ENCODE measurements at regions of chr3 and their contacts with region 1.

Region 1: DNA sequence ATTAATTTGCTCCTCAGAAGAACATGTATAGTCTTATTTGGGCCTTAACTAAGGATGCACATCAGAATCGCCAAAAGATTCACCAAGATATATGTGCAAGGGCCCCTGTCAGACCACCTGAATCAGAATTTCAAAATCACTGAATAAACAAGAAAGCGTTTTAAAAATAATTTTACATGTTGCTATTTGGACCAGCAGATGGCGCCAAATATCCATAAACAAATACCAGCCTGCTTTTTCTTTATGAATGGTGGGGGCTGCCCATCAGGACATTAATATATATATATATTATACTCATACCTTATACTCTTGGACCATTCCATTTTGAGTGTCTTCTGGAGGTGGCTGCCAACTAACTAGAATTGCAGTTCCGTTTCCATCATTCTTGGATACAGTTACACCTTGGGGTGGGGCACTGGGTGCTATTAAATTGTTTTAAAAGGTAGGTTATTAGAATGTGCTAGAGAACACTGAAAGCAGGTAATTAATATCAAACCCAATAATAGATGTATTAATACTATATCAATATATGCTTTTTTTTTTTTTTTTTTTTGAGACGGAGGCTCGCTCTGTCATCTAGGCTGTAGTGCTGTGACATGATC is 1108.3 kb downstream of the ROBO1 start:
- DNase-seq: peak; percentile 17
- H3K4me3 ChIP-seq: no peak overlapping the region
- H3K27ac ChIP-seq: no peak overlapping the region
- H3K4me1 ChIP-seq: no peaks in the 10 kb centered on the region
- H3K27me3 ChIP-seq: no peaks in the 10 kb centered on the region
- CTCF ChIP-seq: peak; percentile 59 to 69 (median 68)
- EP300 ChIP-seq: no peak
- POLR2A ChIP-seq: no peak

Region 2: DNA sequence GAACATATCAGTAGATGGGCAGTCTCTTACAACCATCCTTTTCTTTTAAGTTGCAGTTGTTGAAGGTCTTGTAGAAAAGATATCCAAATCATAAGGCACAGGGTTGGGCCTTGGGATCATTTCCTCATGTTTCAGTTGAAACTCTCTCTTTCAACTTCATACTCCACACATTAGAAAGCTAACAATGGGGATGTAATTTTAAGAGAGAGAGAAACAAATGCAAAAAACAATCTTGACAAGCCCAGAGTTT is 360.4 kb after region 1 on chr3:
- in situ Hi-C with region 1: loop called (anchors 5 to 25 kb)
- intact Hi-C with region 1: no loop called
- DNase-seq: no peak
- H3K4me3 ChIP-seq: no peak overlapping the region
- H3K27ac ChIP-seq: peak overlapping the region in 3 of 4 donors; percentile 81 to 89 (median 87)
- H3K4me1 ChIP-seq: peaks cover 0 to 23% (median 4%) of the 10 kb centered on the region in 4 donors
- H3K27me3 ChIP-seq: peaks cover 12% of the 10 kb centered on the region
- CTCF ChIP-seq: no peak
- EP300 ChIP-seq: no peak
- POLR2A ChIP-seq: no peak

Region 3: DNA sequence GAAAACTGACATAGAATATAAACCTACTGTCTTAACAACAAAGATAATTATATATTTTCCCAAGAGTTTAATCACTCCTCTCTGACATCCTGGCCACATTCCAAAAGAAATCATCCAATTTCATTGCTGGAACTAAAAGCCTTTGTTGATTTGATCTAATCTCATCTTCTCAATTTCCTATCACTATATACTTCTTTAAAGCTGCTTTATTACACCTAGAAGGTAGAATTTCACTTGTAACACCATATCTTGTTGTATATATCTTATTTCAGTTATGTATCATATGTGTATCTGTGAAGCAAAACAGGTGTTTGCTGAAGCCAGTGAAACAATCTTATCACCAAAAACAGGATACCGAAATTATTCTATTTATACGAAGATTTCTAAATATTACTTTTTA is 368.1 kb after region 1 on chr3:
- in situ Hi-C with region 1: loop called (anchors 5 to 25 kb)
- intact Hi-C with region 1: loop called (anchors 1 kb)
- DNase-seq: no peak
- H3K4me3 ChIP-seq: no peak overlapping the region
- H3K27ac ChIP-seq: no peak overlapping the region
- H3K4me1 ChIP-seq: no peaks in the 10 kb centered on the region
- H3K27me3 ChIP-seq: no peaks in the 10 kb centered on the region
- CTCF ChIP-seq: no peak
- EP300 ChIP-seq: no peak
- POLR2A ChIP-seq: no peak

Region 4: DNA sequence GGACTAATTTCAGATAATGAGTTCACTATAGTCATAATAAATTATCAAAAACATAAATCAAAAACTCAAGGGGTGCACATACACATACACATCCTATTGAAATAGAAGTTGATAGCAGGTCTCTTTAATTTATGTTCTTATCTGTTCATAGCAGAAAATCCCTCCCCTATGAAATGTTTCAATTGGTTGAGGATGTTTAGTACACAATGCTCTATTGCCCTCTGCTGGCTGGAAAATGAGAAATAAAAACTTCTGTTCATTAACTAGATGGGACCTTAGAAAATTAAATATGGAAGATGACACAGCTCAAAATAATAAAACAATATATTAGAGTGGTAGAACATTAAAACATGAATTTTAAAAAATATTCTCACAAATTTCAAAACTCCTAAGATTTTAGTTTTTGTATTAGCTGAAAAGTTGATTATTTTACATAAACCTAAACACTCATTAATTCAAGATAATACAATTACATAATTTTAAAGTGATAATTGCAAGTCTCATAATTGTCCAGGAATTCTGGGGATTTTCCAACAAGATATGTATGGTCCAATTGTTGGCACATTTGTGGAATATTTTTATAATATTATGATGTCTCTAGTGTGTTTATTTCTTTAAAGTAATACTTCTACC is 373.3 kb after region 1 on chr3:
- in situ Hi-C with region 1: loop called in 3 of 4 experiments (anchors 5 to 25 kb)
- intact Hi-C with region 1: loop called (anchors 1 kb)
- DNase-seq: no peak
- H3K4me3 ChIP-seq: no peak overlapping the region
- H3K27ac ChIP-seq: no peak overlapping the region
- H3K4me1 ChIP-seq: no peaks in the 10 kb centered on the region
- H3K27me3 ChIP-seq: no peaks in the 10 kb centered on the region
- CTCF ChIP-seq: peak; percentile 49 to 67 (median 63)
- EP300 ChIP-seq: no peak
- POLR2A ChIP-seq: no peak

Region 5: DNA sequence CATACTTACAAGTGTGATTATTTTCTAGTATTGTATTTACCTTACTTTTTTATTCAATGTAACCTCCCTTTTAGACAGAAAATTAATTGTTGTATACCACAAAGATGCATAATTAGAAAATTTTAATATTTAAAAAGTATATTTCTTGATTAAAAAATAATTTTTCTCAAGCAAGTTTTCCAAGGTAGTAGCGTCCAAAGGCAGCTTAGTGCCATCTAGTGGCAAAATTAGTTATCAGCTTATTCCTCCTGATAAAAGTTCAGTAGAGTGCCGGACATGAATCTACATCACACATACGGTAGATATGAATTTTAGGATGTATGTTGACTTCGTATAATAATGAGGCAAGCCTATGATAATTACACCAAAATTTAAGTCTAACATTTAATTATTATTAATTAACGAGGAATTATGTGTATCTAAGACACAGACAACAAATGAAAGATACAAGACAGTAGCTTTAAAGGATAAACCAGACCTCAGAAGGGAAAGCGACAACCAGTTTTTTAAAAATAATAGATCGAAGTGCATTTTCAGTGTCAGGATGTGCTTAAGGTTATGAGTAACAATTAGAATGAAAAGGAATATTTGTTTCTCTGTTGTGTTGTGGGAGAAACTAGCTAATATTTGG is 702.4 kb after region 1 on chr3:
- in situ Hi-C with region 1: loop called in 1 of 4 experiments (anchors 25 kb)
- intact Hi-C with region 1: no loop called
- DNase-seq: no peak
- H3K4me3 ChIP-seq: no peak overlapping the region
- H3K27ac ChIP-seq: no peak overlapping the region
- H3K4me1 ChIP-seq: no peaks in the 10 kb centered on the region
- H3K27me3 ChIP-seq: no peaks in the 10 kb centered on the region
- CTCF ChIP-seq: peak; percentile 51 to 83 (median 69)
- EP300 ChIP-seq: no peak
- POLR2A ChIP-seq: no peak